ENCODE measurements at regions of chr4 and their contacts with region 1.

Region 1: GRCh38 chr4:153142700-153143438 is 61.4 kb upstream of the TRIM2 start:
- DNase-seq: peak; percentile 73
- H3K4me3 ChIP-seq: no peak overlapping the region
- H3K27ac ChIP-seq: no peak overlapping the region
- H3K4me1 ChIP-seq: peaks cover 7% of the 10 kb centered on the region
- H3K27me3 ChIP-seq: no peaks in the 10 kb centered on the region
- CTCF ChIP-seq: peak; percentile 68 to 79 (median 76)
- POLR2A ChIP-seq: no peak

Region 2: DNA sequence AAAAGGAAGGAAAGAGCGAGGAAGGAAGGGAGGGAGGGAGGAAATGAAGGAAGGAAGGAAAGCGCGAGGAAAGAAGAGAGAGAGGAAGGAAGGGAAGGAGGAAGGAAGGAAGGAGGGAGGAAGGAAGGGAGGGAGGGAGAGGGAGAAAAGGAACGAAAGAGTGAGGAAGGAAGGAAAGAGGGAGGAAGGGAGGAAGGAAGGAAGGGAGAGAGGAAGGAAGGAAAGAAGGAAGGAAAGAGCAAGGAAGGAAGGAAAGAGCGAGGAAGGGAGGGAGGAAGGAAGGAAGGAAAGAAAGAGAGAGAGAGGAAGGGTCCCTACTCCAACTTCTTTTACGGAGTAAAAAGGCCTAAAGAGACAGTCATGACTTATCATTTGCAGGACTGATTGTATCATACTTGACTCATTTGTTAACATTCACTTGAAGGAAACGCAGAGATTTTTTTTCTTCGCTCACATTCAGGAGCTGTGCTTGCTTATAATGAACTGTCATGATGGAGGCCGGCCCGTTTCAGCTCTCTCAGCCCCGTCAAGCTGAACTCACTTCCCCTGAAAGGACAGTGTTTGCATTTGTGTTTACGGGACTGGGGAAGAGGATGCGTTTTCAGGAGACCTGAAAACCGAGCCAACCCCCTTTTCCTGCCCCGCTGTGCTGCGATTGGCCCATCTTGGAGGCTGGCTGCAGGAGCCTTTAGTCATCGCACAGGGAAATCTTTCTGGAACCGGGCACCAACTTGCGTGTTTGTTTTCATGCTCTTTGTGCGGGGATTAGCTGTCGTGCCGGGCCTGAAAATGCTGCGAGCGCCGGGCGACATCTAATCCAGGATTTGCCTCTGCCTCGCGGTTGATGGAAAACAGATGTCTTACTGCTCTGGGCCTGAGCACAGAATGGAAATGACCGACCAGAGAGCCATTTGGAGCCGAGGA is 79.2 kb after region 1 on chr4:
- intact Hi-C with region 1: no loop called
- DNase-seq: peak; percentile 61
- H3K4me3 ChIP-seq: peak overlapping the region; percentile 64 to 68
- H3K27ac ChIP-seq: peak overlapping the region; percentile 51 to 86
- H3K4me1 ChIP-seq: no peaks in the 10 kb centered on the region
- H3K27me3 ChIP-seq: no peaks in the 10 kb centered on the region
- CTCF ChIP-seq: no peak
- POLR2A ChIP-seq: no peak

Region 3: GRCh38 chr4:153326513-153326912 is 183.6 kb after region 1 on chr4:
- intact Hi-C with region 1: loop called (anchors 10 kb)
- DNase-seq: no peak
- H3K4me3 ChIP-seq: no peak overlapping the region
- H3K27ac ChIP-seq: no peak overlapping the region
- H3K4me1 ChIP-seq: no peaks in the 10 kb centered on the region
- H3K27me3 ChIP-seq: no peaks in the 10 kb centered on the region
- CTCF ChIP-seq: no peak
- POLR2A ChIP-seq: no peak

Region 4: DNA sequence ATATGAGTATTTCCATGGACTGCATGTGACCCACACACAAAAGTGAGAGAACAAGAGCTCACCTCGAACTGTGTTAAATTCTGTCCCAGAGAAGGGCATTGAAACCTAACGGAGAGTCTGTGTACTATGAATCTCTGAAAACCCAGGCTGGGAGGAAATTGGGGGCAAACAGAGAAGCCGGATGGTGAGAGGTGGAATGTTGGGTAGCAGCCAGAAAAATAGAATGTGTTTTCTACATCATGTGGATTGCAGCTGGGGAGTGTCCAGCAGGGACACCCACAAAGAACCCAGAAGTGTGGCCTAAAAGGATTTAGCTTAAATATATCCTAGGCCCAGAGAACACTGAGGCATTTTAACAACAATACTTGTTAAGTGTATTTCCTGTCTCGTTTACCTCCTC is 240.3 kb after region 1 on chr4:
- intact Hi-C with region 1: no loop called
- DNase-seq: no peak
- H3K4me3 ChIP-seq: no peak overlapping the region
- H3K27ac ChIP-seq: no peak overlapping the region
- H3K4me1 ChIP-seq: no peaks in the 10 kb centered on the region
- H3K27me3 ChIP-seq: no peaks in the 10 kb centered on the region
- CTCF ChIP-seq: no peak
- POLR2A ChIP-seq: no peak

Region 5: GRCh38 chr4:153393397-153393796 is 250.5 kb after region 1 on chr4:
- intact Hi-C with region 1: no loop called
- DNase-seq: no peak
- H3K4me3 ChIP-seq: no peak overlapping the region
- H3K27ac ChIP-seq: no peak overlapping the region
- H3K4me1 ChIP-seq: no peaks in the 10 kb centered on the region
- H3K27me3 ChIP-seq: no peaks in the 10 kb centered on the region
- CTCF ChIP-seq: no peak
- POLR2A ChIP-seq: no peak

Measured in testis (tissue), 5 donors.